Activated T-helper 2 cell treated with anti-CD3 and anti-CD28 coated beads, Interferon-gamma antibody, Interleukin-2, Interleukin-4, amounts not matched to agents 10 μg/mL and 5 μg/mL and 100 μg/mL, durations not matched to agents 14 hours and 24 hours and 36 hours (primary cell): ENCODE measurements at regions of chr20 and their contacts with region 1.

Region 1: GRCh38 chr20:31605031-31605901 is at the start of gene ID1:
- DNase-seq: peak; percentile 84
- H3K4me3 Mint-ChIP-seq: peak within 1 kb of the TSS; percentile 87
- H3K27ac Mint-ChIP-seq: peak within 1 kb of the TSS; percentile 53
- H3K4me1 Mint-ChIP-seq: peaks cover 23% of the 10 kb centered on the region
- H3K27me3 Mint-ChIP-seq: peaks cover 44% of the 10 kb centered on the region
- total RNA-seq, gene ID1: 1.5 and 2.1 TPM in 2 replicates

Region 2: DNA sequence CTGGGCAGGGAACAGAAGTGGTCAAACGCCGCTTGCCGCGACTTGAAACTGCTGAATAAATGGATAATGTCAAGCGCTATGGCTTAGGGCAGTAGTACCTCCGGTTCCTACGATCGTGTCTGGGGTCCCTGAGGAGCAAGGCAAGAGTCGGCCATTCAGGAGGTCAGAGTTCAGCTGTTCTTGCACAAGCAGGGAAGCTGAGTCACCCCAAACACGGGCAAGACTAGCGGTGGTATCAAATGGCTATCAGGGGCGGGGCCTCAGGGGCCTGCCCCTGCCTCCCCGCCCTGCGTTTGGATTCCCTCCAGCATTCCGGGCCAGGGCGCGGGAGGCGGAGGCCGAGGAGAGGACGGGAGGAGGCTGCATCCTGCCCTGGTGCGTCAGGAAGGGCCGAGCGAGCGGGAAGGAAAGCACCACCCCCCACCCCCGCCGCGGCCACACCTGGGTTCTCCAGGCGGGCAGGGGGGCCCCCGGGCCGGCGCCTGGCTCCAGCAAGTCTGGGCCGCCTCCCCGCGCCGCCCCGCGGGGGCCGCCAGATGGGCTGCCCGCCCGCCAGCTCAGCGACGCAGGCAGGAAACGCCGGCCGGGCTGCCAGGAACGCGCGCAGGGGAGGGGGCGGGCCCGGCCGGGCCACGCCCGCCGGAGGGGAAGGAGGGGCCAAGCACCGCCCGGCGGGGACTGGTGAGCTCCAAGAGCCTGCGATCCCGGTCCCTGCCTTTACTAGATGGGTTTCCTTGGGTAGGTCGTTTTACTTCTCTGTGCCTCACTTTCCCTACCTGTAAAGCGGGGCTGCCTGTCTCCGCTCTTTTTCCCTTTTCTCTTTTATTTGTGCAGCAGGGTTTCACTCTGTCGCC is 32.3 kb before region 1 on chr20:
- intact Hi-C with region 1: loop called (anchors 2 kb)
- DNase-seq: peak; percentile 77
- H3K4me3 Mint-ChIP-seq: peak overlapping the region; percentile 83
- H3K27ac Mint-ChIP-seq: peak overlapping the region; percentile 80
- H3K4me1 Mint-ChIP-seq: peaks cover 19% of the 10 kb centered on the region
- H3K27me3 Mint-ChIP-seq: no peaks in the 10 kb centered on the region

Region 3: DNA sequence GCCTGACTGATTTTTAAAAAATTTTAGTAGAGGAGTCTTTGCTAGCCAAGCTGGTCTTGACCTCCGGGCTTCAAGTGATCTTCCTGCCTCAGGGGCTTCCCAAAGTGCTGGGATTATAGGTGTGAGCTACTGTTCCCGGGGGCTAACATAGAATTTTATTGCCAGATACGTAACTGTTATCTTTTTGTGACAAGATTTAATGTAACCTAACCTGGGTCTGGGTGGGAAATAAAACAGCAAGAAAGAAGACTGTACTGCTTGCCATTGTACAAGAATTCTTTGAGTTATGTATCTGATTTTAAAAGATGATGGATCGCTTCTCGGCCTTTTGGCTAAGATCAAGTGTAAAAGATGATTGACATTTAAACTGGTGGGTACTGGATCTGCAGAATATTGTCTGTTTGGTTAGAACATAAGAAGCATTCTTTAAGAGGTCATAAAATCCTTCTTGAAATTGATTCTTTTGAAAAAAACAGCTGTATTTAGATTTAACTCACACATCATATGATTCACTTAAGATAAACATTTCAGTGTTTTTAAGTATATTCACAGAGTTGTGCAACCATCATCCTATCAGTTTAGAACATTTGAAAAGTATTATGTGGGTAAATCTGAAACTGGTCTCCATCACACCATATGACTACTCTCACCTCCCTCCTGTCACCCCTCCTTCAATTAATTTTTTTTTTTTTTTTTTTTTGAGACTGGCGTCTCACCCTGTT is 155.4 kb after region 1 on chr20:
- intact Hi-C with region 1: no loop called
- DNase-seq: no peak
- H3K4me3 Mint-ChIP-seq: no peak overlapping the region
- H3K27ac Mint-ChIP-seq: no peak overlapping the region
- H3K4me1 Mint-ChIP-seq: peaks cover 23% of the 10 kb centered on the region
- H3K27me3 Mint-ChIP-seq: no peaks in the 10 kb centered on the region